ENCODE measurements at regions of chr7 and their contacts with region 1.

Region 1: DNA sequence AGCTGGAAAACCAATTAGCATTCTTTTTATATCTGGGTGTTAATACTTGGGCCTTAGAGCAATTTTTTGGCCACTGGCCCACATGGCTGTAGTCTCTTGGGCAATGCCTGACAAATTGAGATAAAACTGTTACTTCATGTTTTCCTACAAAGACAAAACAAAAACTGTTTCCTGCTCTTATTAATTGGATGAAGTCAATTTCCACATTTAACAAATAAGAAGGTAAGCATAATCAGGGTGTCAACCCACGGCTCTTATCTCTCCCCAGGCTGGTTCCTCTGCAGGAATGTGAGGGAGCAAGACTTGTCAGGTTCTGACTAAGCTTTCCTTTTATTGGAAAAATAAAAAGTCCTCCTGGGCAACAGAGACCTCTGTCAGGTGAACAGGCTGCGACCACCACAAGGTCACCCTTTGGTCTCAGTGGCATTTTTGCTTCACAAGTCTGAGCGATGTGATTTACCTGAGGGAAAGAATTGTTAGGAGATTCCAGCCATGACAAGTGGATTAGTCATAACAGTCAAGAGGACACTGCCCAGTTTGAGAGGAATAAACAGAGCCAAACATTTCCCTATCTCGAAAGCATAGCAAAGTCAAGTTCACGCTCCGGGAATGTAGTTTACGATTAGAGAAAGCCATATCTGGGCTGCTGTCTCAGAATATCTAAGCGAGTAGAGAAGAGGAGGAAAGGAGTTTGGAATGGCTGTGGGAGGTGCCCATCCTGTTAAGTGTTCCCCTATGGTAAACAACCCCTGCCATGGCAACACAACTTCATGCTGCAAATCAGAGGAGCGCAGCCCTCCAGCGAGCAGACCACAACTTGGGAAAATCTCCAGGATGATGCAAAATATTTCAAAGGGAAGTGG is 144.4 kb downstream of the TES start:
- DNase-seq: peak; percentile 99
- H3K4me3 ChIP-seq: peak overlapping the region in 1 of 3 experiments; percentile 14
- H3K27ac ChIP-seq: peak overlapping the region; percentile 99
- H3K4me1 ChIP-seq: peaks cover 63% of the 10 kb centered on the region
- H3K27me3 ChIP-seq: no peaks in the 10 kb centered on the region
- CTCF ChIP-seq: no peak
- POLR2A ChIP-seq: no peak

Region 2: DNA sequence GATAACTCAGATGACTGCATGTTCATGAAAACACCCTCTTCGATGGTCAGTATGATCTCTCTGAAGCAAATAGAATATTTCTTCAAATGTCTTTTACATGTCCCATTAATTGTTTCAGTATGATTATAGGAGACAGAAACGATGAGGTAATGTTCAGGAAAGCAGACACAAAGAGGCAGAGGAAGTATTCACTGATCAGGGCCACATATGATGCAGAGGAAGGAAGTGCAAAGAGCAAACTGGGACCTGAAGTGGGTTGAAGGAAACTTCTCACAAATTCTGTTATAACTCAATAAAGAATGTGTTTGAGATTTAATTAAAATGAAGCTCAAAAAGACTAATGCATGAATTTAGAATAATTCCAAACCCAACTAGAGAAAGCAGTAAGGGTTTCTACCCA is 74.0 kb before region 1 on chr7:
- CTCF ChIA-PET with region 1: no interaction called
- POLR2A ChIA-PET with region 1: no interaction called
- dilution Hi-C with region 1: no loop called
- intact Hi-C with region 1: loop called (anchors 2 kb)
- DNase-seq: peak; percentile 86
- H3K4me3 ChIP-seq: peak overlapping the region in 1 of 3 experiments; percentile 6
- H3K27ac ChIP-seq: peak overlapping the region; percentile 80
- H3K4me1 ChIP-seq: peaks cover 51% of the 10 kb centered on the region
- H3K27me3 ChIP-seq: no peaks in the 10 kb centered on the region
- CTCF ChIP-seq: no peak
- POLR2A ChIP-seq: no peak

Region 3: GRCh38 chr7:116340943-116341907 is 13.6 kb before region 1 on chr7:
- CTCF ChIA-PET with region 1: interaction called, 31 read pairs
- POLR2A ChIA-PET with region 1: interaction called, 12 read pairs
- dilution Hi-C with region 1: no loop called
- intact Hi-C with region 1: loop called (anchors 1 kb)
- DNase-seq: peak; percentile 72
- H3K4me3 ChIP-seq: peak overlapping the region in 1 of 3 experiments; percentile 31
- H3K27ac ChIP-seq: peak overlapping the region; percentile 87
- H3K4me1 ChIP-seq: peaks cover 49% of the 10 kb centered on the region
- H3K27me3 ChIP-seq: no peaks in the 10 kb centered on the region
- CTCF ChIP-seq: peak; percentile 45 to 48
- POLR2A ChIP-seq: no peak

Region 4: DNA sequence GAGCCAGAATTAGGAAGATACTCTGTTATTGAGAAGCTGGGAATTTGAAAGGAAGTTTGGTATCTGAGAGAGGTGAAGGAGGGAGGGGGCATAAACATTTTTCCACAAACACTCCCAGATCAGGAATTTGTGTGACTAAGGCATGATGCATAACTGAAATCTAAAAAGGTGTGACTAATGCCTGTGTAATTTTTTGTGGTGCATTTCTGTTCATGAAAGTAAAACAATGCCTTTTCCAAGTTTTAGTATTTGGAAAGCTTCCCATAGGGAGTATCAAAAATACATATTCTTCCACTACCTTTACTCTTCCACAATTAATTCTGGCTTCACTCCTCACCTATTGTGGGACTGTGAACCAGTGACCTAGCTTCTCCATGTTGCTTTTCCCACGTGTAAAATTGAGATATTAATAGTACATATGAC is 88.3 kb after region 1 on chr7:
- CTCF ChIA-PET with region 1: interaction called, 5 read pairs
- POLR2A ChIA-PET with region 1: interaction called, 5 read pairs
- dilution Hi-C with region 1: no loop called
- intact Hi-C with region 1: loop called (anchors 1 kb)
- DNase-seq: peak; percentile 91
- H3K4me3 ChIP-seq: no peak overlapping the region
- H3K27ac ChIP-seq: peak overlapping the region; percentile 93
- H3K4me1 ChIP-seq: peaks cover 35% of the 10 kb centered on the region
- H3K27me3 ChIP-seq: no peaks in the 10 kb centered on the region
- CTCF ChIP-seq: no peak
- POLR2A ChIP-seq: peak; percentile 50

Region 5: DNA sequence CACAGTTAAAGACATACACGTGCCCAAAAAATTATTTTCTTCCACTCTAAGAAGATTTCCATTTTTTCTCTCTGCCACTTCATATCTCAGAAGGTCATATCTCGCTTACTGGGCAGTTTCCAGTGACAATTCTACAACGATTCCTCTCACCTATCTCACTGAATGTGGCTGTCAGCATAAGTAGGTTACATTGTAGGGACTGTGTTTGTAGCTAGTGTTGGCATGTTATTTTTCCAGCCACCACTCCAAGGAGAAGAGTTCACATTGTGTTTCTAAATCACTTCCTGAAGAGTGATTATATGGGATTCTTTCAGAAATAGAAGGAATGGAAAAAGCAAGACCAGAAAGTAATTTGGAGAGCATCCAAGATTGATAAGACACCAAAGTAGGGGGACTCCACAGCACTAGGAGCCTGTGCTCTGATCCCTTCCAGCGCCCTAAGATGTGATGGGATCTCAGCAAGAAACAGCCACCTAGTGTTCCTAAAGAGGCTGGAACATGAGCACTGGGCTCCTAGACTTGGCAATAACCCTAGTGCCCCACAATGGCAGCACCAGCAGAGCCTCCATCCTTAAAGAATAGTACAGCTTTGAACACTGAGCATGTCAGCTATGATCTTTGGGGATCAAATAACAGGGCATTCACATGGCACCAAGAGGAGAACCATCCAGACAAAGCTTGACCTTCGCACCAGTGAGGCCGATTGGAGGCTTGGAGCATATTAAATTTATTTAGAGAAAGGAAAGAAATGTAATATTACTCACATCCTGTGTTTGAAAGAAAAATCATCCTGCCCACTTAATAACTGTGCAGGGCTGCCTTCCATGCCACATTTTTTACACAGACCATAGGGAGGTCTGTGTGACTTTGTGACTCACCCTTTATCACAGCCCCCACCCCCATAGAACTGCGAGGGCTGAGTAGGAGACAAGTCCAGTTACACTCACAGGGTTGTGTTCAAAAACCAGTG is 221.9 kb after region 1 on chr7:
- CTCF ChIA-PET with region 1: no interaction called
- POLR2A ChIA-PET with region 1: no interaction called
- dilution Hi-C with region 1: no loop called
- intact Hi-C with region 1: loop called (anchors 1 kb)
- DNase-seq: peak; percentile 98
- H3K4me3 ChIP-seq: peak overlapping the region in 1 of 3 experiments; percentile 10
- H3K27ac ChIP-seq: peak overlapping the region; percentile 95
- H3K4me1 ChIP-seq: peaks cover 51% of the 10 kb centered on the region
- H3K27me3 ChIP-seq: no peaks in the 10 kb centered on the region
- CTCF ChIP-seq: no peak
- POLR2A ChIP-seq: peak; percentile 45

Measured in endothelial cell of umbilical vein (primary cell).